Activated CD4-positive, alpha-beta memory T cell treated with anti-CD3 and anti-CD28 coated beads for 36 hours (primary cell): ENCODE measurements at regions of chr2 and their contacts with region 1.

Region 1: DNA sequence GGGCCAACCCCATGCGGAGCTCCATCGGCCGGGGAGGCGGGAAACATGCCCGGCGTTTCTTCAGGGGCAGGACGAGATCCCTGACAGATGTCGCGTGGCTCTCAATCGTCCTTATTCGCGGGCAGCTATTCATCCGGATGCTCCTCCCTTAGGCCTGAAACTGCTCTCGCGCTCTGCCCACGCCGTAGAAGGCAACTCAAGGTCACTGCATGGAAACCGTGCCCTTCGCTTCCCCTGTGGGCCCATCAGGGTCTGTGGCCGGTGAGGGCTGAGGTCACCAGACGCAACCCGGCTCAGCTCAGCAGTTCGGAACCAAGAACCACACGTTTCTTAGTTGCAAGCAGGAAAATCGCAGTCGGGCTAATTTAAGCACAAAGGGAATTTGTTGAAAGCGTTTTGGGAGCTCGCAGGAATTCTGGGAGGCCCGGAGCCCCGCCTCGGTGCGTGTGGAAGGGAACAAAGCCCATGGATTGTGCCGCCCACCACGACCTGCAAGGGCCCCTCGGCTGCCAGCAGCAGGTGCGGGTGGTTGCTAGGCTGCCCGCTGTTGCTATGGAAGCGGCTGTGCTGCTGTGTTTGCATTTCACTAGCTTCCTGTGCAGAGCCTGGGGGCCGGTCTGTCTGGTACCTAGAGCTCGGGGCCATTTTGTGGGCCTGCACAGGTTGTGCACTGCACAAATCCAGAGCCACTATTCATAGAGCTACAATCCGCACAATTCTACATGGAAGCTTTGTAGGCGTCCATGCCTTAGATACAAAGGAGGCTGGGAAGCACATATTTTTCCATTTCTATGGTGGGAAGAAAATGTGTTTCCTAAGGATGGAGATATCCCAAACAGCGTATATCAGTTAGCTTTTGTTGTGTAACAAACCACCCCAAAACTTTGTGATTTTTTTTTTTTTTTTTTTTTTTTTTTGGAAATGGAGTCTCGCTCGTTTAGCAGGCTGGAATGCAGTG is 6.0 kb upstream of the ALLC start:
- DNase-seq: peak; percentile 84
- H3K4me3 Mint-ChIP-seq: peak overlapping the region; percentile 78
- H3K27ac Mint-ChIP-seq: peak overlapping the region; percentile 84
- H3K4me1 Mint-ChIP-seq: peaks cover 12% of the 10 kb centered on the region
- H3K27me3 Mint-ChIP-seq: peaks cover 4% of the 10 kb centered on the region

Region 2: GRCh38 chr2:3198119-3198518 is 453.9 kb before region 1 on chr2:
- CTCF ChIA-PET with region 1: no interaction called
- POLR2A ChIA-PET with region 1: no interaction called
- intact Hi-C with region 1: loop called (anchors 1 kb)
- DNase-seq: peak; percentile 68
- H3K4me3 Mint-ChIP-seq: peak overlapping the region; percentile 40
- H3K27ac Mint-ChIP-seq: peak overlapping the region; percentile 78
- H3K4me1 Mint-ChIP-seq: peaks cover 14% of the 10 kb centered on the region
- H3K27me3 Mint-ChIP-seq: no peaks in the 10 kb centered on the region

Region 3: DNA sequence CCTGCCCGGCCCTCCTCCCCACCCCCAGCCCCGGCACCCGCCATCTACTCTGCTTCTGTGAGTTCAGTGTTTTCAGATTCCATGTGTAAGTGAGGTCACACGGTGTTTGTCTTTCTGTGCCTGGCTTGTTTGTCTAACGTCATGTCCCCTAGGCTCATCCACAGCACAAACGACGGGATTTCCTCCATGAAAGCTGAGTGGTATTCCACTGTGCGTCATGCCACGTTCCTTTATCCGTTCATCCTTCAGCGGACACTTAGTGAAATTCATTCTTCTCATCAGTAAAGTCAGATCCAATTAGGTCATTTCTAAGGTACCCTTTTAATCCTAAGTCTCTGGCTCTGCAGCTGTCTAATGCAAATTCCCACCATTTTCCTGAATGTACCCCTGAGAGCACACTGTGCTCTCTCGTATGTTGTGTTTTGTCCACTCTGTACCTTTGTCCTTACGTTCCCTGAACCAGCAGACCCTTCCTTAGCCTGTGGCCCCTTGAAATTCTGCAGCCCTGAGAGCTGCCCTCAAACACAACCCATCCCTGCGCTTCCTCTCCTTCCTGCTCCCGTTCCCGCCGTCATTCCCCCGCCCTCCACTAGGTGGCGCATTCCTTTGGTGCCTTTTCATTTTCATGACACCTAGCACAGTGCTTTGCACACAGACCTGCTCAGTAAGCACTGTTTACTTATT is 228.3 kb before region 1 on chr2:
- CTCF ChIA-PET with region 1: interaction called, 65 read pairs
- POLR2A ChIA-PET with region 1: no interaction called
- intact Hi-C with region 1: loop called (anchors 1 kb)
- DNase-seq: peak; percentile 83
- H3K4me3 Mint-ChIP-seq: no peak overlapping the region
- H3K27ac Mint-ChIP-seq: no peak overlapping the region
- H3K4me1 Mint-ChIP-seq: peaks cover 5% of the 10 kb centered on the region
- H3K27me3 Mint-ChIP-seq: no peaks in the 10 kb centered on the region

Region 4: DNA sequence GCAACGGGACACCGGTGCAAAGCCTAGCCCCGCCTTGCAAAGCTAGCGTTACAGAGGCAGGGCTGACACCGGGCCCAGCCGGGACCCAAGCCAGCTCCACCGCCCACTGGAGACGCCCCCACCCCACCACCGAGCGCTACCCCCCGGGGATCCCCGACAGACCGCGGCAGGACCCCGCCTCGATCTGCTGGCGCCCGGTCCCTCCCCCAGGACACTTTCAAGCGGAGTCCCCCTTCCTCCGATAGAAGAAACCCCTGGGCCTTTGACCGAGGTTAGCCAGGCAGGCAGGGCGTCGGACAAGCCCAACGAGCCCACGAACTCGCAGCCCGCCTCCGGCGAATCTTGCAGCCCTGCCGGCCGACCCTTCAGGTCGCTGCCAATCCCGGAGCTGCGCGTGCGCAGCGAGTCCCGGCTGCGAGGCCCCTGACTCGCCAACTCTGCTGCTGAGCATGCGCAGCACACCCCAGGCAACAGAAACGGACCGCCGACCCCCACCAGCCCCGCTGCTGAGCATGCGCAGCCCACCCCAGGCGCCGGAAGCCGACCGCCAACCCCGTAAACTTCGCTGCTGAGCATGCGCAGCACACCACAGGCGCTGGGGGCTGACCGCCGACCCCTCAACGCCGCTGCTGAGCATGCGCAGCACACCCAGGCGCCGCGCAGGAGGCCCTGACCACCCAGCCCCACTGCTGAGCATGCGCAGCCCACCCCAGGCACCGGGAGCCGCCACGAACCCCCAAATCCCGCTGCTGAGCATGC is 133.3 kb before region 1 on chr2:
- CTCF ChIA-PET with region 1: no interaction called
- POLR2A ChIA-PET with region 1: interaction called, 5 read pairs
- intact Hi-C with region 1: loop called (anchors 1 kb)
- DNase-seq: peak; percentile 99
- H3K4me3 Mint-ChIP-seq: peak overlapping the region; percentile 84
- H3K27ac Mint-ChIP-seq: peak overlapping the region; percentile 89
- H3K4me1 Mint-ChIP-seq: peaks cover 38% of the 10 kb centered on the region
- H3K27me3 Mint-ChIP-seq: no peaks in the 10 kb centered on the region

Region 5: DNA sequence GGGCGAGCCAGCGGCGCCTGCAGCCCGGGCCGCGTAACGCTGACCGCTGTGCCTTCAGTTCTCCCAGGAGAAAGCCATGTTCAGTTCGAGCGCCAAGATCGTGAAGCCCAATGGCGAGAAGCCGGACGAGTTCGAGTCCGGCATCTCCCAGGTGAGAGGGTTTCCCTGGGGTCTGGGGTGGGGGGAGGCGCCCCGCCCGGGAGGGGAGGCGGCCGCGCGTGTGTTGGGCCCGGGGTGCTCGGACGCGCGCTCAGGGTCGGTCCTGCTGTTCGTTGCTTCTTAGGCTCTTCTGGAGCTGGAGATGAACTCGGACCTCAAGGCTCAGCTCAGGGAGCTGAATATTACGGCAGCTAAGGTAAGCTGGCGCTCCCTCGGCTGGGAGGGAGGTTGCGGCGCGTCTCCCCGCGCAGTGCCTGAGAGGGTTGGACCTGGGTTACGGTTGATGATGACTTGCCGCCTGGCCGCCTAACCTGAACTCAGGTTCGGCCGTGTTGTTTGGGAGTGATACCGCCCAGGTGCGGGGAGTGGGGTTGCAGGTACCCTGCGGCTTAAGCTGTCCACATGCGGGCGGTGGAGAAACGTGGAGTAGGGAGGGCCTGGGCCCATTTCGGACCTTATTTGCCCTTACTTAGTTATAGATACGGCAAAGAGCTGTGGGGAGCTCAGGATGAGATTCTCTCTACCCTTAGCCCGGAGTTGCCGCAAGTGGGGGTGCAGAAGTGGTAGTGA is 76.3 kb before region 1 on chr2:
- CTCF ChIA-PET with region 1: interaction called, 5 read pairs
- POLR2A ChIA-PET with region 1: interaction called, 4 read pairs
- intact Hi-C with region 1: loop called (anchors 1 kb)
- DNase-seq: peak; percentile 42
- H3K4me3 Mint-ChIP-seq: peak overlapping the region; percentile 98
- H3K27ac Mint-ChIP-seq: peak overlapping the region; percentile 93
- H3K4me1 Mint-ChIP-seq: peaks cover 44% of the 10 kb centered on the region
- H3K27me3 Mint-ChIP-seq: no peaks in the 10 kb centered on the region

Region 6: GRCh38 chr2:3662239-3662638 is 10.3 kb after region 1 on chr2:
- CTCF ChIA-PET with region 1: interaction called, 12 read pairs
- POLR2A ChIA-PET with region 1: no interaction called
- intact Hi-C with region 1: no loop called
- DNase-seq: no peak
- H3K4me3 Mint-ChIP-seq: no peak overlapping the region
- H3K27ac Mint-ChIP-seq: no peak overlapping the region
- H3K4me1 Mint-ChIP-seq: peaks cover 18% of the 10 kb centered on the region
- H3K27me3 Mint-ChIP-seq: peaks cover 4% of the 10 kb centered on the region

Region 7: DNA sequence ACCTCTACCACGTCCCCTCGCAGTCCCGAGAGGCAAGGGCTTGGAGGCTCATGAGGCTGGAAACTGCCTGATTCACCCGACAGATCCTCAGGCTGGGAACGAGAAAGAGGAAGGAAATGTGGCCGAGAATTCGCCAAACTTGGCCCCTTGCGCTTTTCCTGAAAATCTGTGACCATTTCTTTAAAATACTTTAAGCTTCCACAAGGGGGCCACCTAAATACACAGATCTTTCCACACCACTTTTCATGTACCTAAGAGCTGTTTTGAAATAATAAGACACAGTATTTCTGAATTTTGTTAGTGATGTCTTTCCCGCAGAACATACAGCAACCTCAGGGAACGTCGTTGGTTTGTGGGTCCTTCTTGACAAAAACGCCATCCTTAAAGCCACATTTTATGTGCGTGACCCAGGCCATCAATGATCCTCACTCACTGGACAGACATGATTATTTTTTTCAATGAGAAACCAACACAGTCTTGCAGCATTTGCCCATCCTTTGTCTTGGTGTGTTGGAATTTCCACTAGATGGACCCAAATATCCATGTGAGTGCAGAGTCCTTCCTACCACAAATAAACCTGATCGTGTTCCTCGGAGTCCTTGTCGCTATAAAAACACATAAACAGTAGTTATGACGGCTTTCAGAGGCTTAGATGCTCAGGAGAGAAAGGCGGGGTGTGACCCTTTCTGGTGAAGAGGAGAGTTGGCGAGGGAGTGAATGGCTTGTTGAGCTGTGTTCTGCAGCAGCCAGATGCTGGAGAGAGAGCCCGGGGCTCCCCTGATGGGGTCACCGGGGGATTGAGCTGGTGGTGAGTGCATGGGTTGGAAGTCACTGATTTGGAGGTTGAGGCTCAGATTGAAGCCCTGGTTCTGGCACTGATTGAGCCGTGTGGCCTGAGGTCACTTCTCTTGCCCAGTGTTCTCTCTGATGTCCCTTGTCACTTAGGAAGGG is 76.4 kb after region 1 on chr2:
- CTCF ChIA-PET with region 1: no interaction called
- POLR2A ChIA-PET with region 1: no interaction called
- intact Hi-C with region 1: no loop called
- DNase-seq: no peak
- H3K4me3 Mint-ChIP-seq: no peak overlapping the region
- H3K27ac Mint-ChIP-seq: no peak overlapping the region
- H3K4me1 Mint-ChIP-seq: no peaks in the 10 kb centered on the region
- H3K27me3 Mint-ChIP-seq: peaks cover 6% of the 10 kb centered on the region